KBM-7 (cell line): ENCODE measurements at regions of chr2 and their contacts with region 1.

Region 1: DNA sequence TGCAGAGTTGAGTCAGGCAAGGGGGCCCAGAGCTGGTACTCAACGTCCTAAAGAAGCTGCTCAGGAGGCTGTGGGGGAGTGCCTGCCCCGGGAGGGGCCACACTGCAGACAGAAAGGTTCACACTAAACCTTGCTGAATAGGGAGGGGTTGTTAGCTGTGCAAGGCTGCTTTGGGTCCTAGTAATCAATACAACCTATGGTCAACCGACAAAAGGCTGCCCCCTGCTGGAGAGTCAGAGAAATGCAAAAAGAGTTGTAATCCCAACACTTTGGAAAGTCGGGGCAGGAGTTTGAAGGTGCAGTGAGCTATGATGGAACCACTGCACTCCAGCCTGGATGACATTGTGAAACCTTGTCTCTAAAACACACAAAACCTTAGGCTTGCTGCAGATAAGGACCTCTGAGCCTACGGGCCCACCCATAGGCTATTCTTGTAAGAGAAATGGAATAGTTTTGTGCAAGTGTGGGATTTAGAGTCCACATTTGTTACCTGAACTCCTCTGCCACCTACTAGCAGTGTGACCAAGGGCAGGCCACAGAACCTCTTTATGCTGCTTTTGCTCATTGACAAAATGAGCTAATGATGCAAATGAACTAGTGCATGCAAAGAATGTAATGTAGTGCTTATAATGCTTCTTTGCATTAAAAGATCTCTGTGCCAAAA is 81.5 kb downstream of the PRPF40A start:
- DNase-seq: peak; percentile 67

Region 2: DNA sequence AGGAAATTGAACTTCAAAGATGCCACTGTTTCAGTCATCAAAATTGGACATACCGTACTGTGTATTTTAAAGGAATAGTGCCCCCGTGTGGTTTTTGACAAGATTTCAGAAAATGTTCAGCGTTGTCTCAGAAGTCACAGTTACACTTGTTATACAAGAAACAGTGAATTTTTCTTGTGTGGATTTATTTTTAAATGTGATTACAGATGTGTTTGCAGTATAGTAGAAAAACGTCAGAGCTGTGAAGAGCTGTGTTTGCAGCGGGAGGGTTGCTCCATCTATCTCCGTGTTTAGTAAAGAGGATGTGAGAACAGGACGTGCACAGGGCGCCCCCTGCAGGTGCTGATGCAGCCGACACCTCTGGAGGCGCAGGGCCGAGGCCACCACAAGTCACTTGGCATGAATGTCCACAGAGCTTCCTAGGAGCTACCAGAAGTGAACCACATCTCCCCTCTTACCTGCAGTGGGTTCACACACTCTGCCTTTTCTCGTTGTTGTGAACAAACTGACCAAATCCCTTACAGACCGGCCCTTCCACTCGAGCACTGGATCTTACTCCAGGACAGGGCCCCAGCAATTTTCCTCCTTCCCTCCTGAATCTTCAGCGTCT is 610.0 kb before region 1 on chr2:
- in situ Hi-C with region 1: loop called (anchors 25 kb)
- DNase-seq: peak; percentile 94

Region 3: GRCh38 chr2:152189622-152190495 is 445.9 kb before region 1 on chr2:
- in situ Hi-C with region 1: loop called (anchors 10 kb)
- DNase-seq: peak; percentile 70

Region 4: DNA sequence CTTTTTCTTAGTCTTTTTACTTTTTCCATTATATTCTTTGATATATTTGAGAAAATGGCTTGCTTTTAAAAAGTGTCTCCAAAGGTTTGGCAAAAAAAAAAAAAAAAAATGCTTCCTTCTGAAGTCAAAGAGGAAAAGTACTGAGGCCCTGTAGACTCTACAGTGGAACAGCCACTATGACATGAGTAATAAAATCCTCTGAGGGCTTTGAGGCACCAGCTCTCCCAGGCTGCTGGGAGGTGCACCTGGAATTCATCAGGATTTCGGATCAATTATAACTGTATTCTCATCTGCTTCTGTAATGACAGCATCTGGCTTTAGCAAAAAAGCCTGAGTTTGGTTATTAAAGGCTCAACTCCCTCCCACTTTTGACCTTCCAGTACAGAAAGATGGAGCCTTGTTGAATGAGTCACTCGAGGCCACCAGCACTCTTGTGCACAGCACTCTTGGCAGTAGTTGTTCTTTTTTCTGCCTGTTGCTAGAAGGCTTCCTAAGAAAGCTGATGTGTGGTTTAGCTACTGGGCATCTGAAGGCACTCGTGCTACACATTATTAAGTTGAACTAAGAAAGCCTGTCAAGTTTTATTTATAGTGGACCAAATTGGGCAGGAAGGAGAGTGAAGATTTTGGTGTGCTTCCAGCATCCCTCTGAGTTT is 49.8 kb before region 1 on chr2:
- in situ Hi-C with region 1: no loop called
- DNase-seq: no peak

Region 5: DNA sequence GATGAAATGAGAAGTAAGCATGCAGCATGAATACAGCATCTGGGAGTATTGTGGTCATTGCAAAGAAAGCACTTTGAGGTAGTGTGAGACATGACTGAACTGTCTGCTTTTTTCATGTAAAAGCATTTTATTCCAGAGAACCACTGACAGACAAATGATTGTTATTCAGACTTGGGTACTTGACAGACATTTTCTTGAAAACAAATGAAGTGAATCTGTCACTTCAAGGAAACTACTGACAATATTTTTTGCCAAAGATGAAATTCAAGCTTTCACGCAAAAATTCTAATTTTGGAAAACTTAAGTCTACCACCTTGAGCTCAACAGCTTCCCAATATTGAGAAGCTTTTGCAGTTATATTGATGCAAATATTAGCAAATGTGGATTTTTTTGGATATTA is 338.4 kb after region 1 on chr2:
- in situ Hi-C with region 1: no loop called
- DNase-seq: no peak